IMR-90 (cell line): ENCODE measurements at regions of chr19 and their contacts with region 1.

Region 1: DNA sequence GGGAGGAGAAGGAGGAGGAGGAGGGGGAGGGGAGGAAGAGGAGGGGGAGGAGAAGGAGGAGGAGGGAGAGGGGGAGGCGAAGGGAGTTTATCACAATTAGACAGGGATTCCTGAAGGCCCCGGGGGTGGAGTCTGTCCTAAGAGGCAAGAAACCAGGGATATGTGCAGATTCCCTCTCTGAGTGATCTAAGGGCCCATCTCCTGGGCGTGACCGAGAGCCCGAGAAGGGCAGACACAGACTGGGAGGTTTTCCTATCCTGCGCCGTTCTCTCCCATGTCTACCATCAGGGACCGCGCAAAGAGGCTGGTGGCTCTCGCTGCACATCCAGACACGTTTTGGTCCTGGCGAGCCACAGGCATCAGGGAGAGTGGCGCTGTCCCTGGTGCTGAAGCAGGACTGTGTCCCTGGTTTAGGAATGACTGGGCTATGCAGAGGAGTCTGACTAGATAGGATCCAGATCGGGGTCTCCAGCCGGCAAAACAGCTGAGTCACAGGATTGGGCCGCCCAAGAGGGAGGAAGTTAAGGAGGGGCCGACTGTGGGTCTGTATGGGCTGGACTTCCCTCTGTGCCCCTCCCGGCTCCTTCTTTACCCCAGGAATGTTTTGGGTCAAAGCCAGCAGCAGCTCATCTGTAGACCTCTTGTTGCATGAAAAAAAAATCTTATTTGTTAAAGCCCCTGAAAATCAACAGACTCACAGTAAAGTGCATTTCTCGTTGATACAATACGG is 17.9 kb upstream of the ZNF175 start:
- DNase-seq: peak; percentile 47
- ATAC-seq: peak; percentile 90
- H3K4me3 ChIP-seq: no peak overlapping the region
- H3K27ac ChIP-seq: no peak overlapping the region
- H3K4me1 ChIP-seq: no peaks in the 10 kb centered on the region
- H3K27me3 ChIP-seq: no peaks in the 10 kb centered on the region
- CTCF ChIP-seq: no peak
- POLR2A ChIP-seq: no peak
- RAD21 ChIP-seq: no peak

Region 2: GRCh38 chr19:51422053-51422448 is 131.1 kb before region 1 on chr19:
- CTCF ChIA-PET with region 1: no interaction called
- POLR2A ChIA-PET with region 1: no interaction called
- dilution Hi-C with region 1: no loop called
- in situ Hi-C with region 1: no loop called
- intact Hi-C with region 1: loop called (anchors 5 kb)
- DNase-seq: peak; percentile 59
- ATAC-seq: peak; percentile 100
- H3K4me3 ChIP-seq: no peak overlapping the region
- H3K27ac ChIP-seq: no peak overlapping the region
- H3K4me1 ChIP-seq: no peaks in the 10 kb centered on the region
- H3K27me3 ChIP-seq: no peaks in the 10 kb centered on the region
- CTCF ChIP-seq: peak; percentile 94
- POLR2A ChIP-seq: no peak
- RAD21 ChIP-seq: peak; percentile 76

Region 3: GRCh38 chr19:51607920-51608562 is 54.9 kb after region 1 on chr19:
- CTCF ChIA-PET with region 1: no interaction called
- POLR2A ChIA-PET with region 1: no interaction called
- dilution Hi-C with region 1: no loop called
- in situ Hi-C with region 1: no loop called
- intact Hi-C with region 1: loop called (anchors 1 kb)
- DNase-seq: peak; percentile 70
- ATAC-seq: peak; percentile 94
- H3K4me3 ChIP-seq: no peak overlapping the region
- H3K27ac ChIP-seq: no peak overlapping the region
- H3K4me1 ChIP-seq: no peaks in the 10 kb centered on the region
- H3K27me3 ChIP-seq: no peaks in the 10 kb centered on the region
- CTCF ChIP-seq: peak; percentile 76
- POLR2A ChIP-seq: no peak
- RAD21 ChIP-seq: peak; percentile 47

Region 4: GRCh38 chr19:52637718-52638585 is 1084.8 kb after region 1 on chr19 and contains the start of gene ZNF83:
- CTCF ChIA-PET with region 1: no interaction called
- POLR2A ChIA-PET with region 1: no interaction called
- dilution Hi-C with region 1: no loop called
- in situ Hi-C with region 1: no loop called
- intact Hi-C with region 1: no loop called
- DNase-seq: peak; percentile 91
- ATAC-seq: peak; percentile 98
- H3K4me3 ChIP-seq: peak within 1 kb of the TSS; percentile 85
- H3K27ac ChIP-seq: peak within 1 kb of the TSS; percentile 90
- H3K4me1 ChIP-seq: peaks cover 3% of the 10 kb centered on the region; the same call in 1 of the 2 replicates
- H3K27me3 ChIP-seq: no peaks in the 10 kb centered on the region
- CTCF ChIP-seq: no peak
- POLR2A ChIP-seq: peak; percentile 85
- RAD21 ChIP-seq: no peak
- total RNA-seq, gene ZNF83: 36.9 and 42.8 TPM in 2 replicates